Heart left ventricle (tissue), 16 donors: ENCODE measurements at regions of chr20 and their contacts with region 1.

Region 1: GRCh38 chr20:7935027-7935551 is 5.2 kb downstream of the HAO1 start:
- DNase-seq: no peak
- ATAC-seq: no peak
- H3K4me3 ChIP-seq: no peak overlapping the region
- H3K27ac ChIP-seq: no peak overlapping the region
- H3K4me1 ChIP-seq: peaks cover 0 to 4% (median 0%) of the 10 kb centered on the region in 12 donors
- H3K27me3 ChIP-seq: peaks cover 0 to 8% (median 0%) of the 10 kb centered on the region in 9 donors
- CTCF ChIP-seq: no peak
- POLR2A ChIP-seq: no peak

Region 2: DNA sequence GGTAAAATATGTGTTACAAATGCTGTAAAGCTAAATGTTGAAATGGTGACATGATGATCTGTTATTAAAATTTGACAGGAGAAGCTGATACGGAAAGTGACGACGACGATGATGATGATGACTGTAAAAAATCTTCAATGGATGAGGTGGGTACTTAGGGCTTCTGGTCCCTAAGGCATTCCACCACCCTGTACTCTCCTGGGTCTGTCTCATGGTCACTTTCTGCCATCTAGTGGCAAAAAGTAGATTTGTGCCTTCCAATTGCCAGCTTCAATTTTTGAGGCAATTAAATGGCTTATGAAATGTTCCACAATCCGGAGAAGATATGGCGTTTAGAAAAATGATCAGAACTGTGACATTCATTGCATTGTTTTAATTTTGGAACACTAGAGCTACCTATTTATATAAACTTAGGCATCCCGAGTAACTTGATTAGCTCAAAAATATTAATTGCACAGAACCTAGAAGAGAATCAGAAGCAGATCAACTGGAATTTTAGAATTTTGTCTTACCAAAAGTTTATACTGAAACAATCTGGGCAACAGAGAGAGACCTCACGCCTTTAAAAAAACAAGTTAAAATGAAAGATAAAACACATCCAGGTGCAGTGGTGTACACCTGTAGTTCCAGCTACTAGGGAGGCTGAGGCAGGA is 787.3 kb after region 1 on chr20:
- intact Hi-C with region 1: loop called (anchors 2 to 5 kb)
- DNase-seq: peak in 2 of 5 donors; percentile 26 to 27
- ATAC-seq: peak; percentile 53 to 86 (median 81)
- H3K4me3 ChIP-seq: no peak overlapping the region
- H3K27ac ChIP-seq: no peak overlapping the region
- H3K4me1 ChIP-seq: peaks cover 0 to 2% (median 0%) of the 10 kb centered on the region in 12 donors
- H3K27me3 ChIP-seq: no peaks in the 10 kb centered on the region
- CTCF ChIP-seq: peak; percentile 64 to 87 (median 80)
- POLR2A ChIP-seq: no peak